T-cell (primary cell): ENCODE measurements at regions of chr9 and their contacts with region 1.

Region 1: GRCh38 chr9:97710356-97711222 is 13.4 kb upstream of the XPA start:
- DNase-seq: peak in 29 of 35 experiments; percentile 6 to 79 (median 28)
- ATAC-seq: peak; percentile 77 to 87 (median 84)
- H3K4me3 ChIP-seq: no peak overlapping the region
- H3K4me3 Mint-ChIP-seq: peak overlapping the region in 1 of 3 donors; percentile 47
- H3K27ac ChIP-seq: no peak overlapping the region
- H3K27ac Mint-ChIP-seq: peak overlapping the region in 1 of 2 donors; percentile 43
- H3K4me1 ChIP-seq: peaks cover 20 to 21% of the 10 kb centered on the region in 2 experiments
- H3K4me1 Mint-ChIP-seq: peaks cover 33 to 40% (median 34%) of the 10 kb centered on the region in 3 donors
- H3K27me3 ChIP-seq: peaks cover 0 to 27% of the 10 kb centered on the region in 2 experiments
- H3K27me3 Mint-ChIP-seq: peaks cover 10 to 16% of the 10 kb centered on the region in 2 donors

Region 2: DNA sequence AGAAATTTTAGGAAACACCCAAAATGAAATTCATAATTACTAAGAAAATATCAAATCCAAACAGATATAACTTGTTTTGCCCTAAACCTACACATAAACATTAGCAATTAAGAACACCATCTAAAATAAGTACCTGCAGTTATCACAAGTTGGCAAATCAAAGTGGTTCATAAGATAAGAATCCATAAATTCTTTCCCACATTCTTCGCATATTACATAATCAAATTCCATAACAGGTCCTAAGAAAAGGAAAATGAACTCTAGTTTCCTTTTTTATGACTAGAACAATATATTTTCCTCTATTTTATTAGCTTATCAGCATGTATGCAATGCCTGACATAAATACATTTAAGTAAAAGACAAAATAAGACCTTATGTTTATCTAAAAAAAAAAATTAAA is 21.2 kb before region 1 on chr9:
- CTCF ChIA-PET with region 1: interaction called in 1 of 2 experiments, 10 read pairs
- POLR2A ChIA-PET with region 1: no interaction called
- DNase-seq: no peak
- ATAC-seq: no peak
- H3K4me3 ChIP-seq: no peak overlapping the region
- H3K4me3 Mint-ChIP-seq: no peak overlapping the region
- H3K27ac ChIP-seq: no peak overlapping the region
- H3K27ac Mint-ChIP-seq: peak overlapping the region in 1 of 2 donors; percentile 39
- H3K4me1 ChIP-seq: peaks cover 0 to 6% of the 10 kb centered on the region in 2 experiments
- H3K4me1 Mint-ChIP-seq: peaks cover 20 to 27% (median 25%) of the 10 kb centered on the region in 3 donors
- H3K27me3 ChIP-seq: no peaks in the 10 kb centered on the region
- H3K27me3 Mint-ChIP-seq: no peaks in the 10 kb centered on the region

Region 3: GRCh38 chr9:97747201-97747965 is 36.8 kb after region 1 on chr9:
- CTCF ChIA-PET with region 1: no interaction called
- POLR2A ChIA-PET with region 1: no interaction called
- DNase-seq: no peak
- ATAC-seq: no peak
- H3K4me3 ChIP-seq: no peak overlapping the region
- H3K4me3 Mint-ChIP-seq: no peak overlapping the region
- H3K27ac ChIP-seq: no peak overlapping the region
- H3K27ac Mint-ChIP-seq: no peak overlapping the region
- H3K4me1 ChIP-seq: no peaks in the 10 kb centered on the region
- H3K4me1 Mint-ChIP-seq: no peaks in the 10 kb centered on the region
- H3K27me3 ChIP-seq: peaks cover 7 to 33% of the 10 kb centered on the region in 2 experiments
- H3K27me3 Mint-ChIP-seq: peaks cover 41 to 46% of the 10 kb centered on the region in 2 donors